ENCODE measurements at regions of chr2 and their contacts with region 1.

Region 1: GRCh38 chr2:31333527-31334183 is 80.9 kb downstream of the XDH start:
- DNase-seq: peak; percentile 70
- ATAC-seq: peak; percentile 94
- H3K4me3 Mint-ChIP-seq: no peak overlapping the region
- H3K27ac Mint-ChIP-seq: peak overlapping the region; percentile 50
- H3K4me1 Mint-ChIP-seq: peaks cover 10% of the 10 kb centered on the region
- H3K27me3 Mint-ChIP-seq: peaks cover 3% of the 10 kb centered on the region
- CTCF ChIP-seq: peak; percentile 87

Region 2: DNA sequence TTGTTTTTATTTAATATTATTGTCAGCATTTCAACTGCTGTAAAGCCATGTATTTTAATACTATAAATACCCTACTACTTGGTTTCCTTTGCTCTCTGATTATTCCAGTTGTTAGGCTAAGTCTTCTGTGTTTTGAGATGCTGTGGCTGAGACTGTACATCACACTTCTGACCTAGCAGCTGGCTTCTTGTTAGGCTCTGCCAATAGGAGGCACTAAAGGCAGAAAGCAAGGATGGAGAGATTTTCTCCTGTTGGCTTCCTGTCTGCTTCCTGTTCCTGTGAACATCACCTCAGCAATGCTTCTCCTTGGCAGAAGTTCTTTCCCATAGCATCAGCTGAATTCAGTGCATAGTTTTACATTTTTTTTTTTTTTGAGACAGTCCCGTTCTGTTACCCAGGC is 1255.1 kb before region 1 on chr2:
- CTCF ChIA-PET with region 1: no interaction called
- POLR2A ChIA-PET with region 1: no interaction called
- intact Hi-C with region 1: loop called (anchors 2 kb)
- DNase-seq: no peak
- ATAC-seq: no peak
- H3K4me3 Mint-ChIP-seq: no peak overlapping the region
- H3K27ac Mint-ChIP-seq: no peak overlapping the region
- H3K4me1 Mint-ChIP-seq: no peaks in the 10 kb centered on the region
- H3K27me3 Mint-ChIP-seq: peaks cover 20% of the 10 kb centered on the region
- CTCF ChIP-seq: no peak

Region 3: DNA sequence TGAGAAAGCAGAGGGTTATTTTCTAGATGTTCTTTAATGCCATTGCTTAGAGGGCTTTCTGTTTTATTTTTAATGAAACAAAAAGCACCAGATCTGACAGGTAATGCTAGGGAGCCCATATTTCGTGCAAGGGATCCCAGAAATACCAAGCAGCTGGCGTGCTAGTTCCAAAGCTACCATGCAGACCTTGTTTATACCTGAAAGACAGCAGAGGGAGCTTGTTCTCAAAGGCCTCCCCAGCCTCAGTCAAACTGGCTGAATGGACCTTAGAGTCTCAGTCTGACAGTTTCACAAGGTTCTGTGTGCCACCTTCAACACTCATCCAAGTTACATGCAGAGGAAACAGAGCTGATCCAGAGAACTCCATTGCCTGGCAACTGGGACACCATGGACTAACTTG is 244.0 kb before region 1 on chr2:
- CTCF ChIA-PET with region 1: interaction called, 4 read pairs
- POLR2A ChIA-PET with region 1: no interaction called
- intact Hi-C with region 1: loop called (anchors 2 kb)
- DNase-seq: no peak
- ATAC-seq: no peak
- H3K4me3 Mint-ChIP-seq: no peak overlapping the region
- H3K27ac Mint-ChIP-seq: no peak overlapping the region
- H3K4me1 Mint-ChIP-seq: no peaks in the 10 kb centered on the region
- H3K27me3 Mint-ChIP-seq: no peaks in the 10 kb centered on the region
- CTCF ChIP-seq: no peak

Region 4: DNA sequence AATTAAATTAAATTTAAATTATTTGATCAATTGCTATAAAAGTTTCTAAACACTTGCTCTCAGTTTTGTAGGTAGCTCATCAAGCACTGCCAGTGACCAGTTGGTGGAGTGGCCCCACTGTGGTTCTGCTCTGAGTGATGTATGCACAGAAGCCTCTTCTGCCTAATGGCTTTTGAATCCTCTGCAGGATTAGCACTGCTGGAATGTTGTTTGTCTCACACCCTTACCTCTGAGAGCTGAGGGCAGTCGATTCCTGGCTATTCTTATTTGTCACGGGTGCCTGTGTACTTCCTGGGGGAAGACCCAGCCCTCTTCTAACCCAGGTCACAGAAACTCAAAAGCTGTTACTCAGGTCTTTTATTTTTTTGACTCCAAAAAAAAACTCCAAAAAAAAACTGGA is 125.9 kb before region 1 on chr2:
- CTCF ChIA-PET with region 1: interaction called, 11 read pairs
- POLR2A ChIA-PET with region 1: no interaction called
- intact Hi-C with region 1: loop called (anchors 1 kb)
- DNase-seq: no peak
- ATAC-seq: peak; percentile 49
- H3K4me3 Mint-ChIP-seq: peak overlapping the region; percentile 15
- H3K27ac Mint-ChIP-seq: no peak overlapping the region
- H3K4me1 Mint-ChIP-seq: peaks cover 20% of the 10 kb centered on the region
- H3K27me3 Mint-ChIP-seq: no peaks in the 10 kb centered on the region
- CTCF ChIP-seq: no peak

Region 5: DNA sequence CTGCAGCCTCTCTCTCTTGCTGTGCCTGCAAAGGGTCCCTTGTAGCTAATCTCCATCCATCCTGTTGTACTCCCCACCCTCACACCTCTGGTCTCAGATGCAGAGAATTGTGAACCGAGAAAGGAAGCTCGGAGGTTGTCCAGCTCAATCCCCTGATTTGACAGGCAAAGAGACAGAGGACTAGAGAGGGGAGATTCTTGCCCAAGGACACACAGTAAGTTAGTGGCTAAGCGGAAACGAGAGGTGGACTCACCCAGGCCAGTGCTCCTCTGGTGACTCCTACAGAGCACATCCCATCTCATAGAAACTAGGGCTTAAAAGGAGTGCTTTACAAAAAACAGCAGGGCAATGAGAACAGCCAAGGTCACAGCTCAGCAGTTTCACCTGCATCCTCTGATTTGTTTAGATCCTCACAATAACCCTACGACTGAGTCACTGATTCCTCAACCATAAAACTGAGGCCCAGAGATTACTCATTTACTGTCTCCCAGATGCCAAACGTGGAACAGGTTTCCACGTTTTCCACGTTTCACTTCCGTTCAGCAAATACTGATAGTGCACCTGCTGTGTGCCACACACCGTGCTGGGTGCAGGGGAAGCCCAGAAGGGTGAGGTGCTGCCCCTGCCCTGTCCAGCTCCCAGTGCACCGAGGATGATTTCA is 77.6 kb before region 1 on chr2:
- CTCF ChIA-PET with region 1: interaction called, 7 read pairs
- POLR2A ChIA-PET with region 1: interaction called, 7 read pairs
- intact Hi-C with region 1: loop called (anchors 2 kb)
- DNase-seq: peak; percentile 58
- ATAC-seq: peak; percentile 70
- H3K4me3 Mint-ChIP-seq: peak overlapping the region; percentile 72
- H3K27ac Mint-ChIP-seq: peak overlapping the region; percentile 84
- H3K4me1 Mint-ChIP-seq: peaks cover 85% of the 10 kb centered on the region
- H3K27me3 Mint-ChIP-seq: no peaks in the 10 kb centered on the region
- CTCF ChIP-seq: no peak

Region 6: DNA sequence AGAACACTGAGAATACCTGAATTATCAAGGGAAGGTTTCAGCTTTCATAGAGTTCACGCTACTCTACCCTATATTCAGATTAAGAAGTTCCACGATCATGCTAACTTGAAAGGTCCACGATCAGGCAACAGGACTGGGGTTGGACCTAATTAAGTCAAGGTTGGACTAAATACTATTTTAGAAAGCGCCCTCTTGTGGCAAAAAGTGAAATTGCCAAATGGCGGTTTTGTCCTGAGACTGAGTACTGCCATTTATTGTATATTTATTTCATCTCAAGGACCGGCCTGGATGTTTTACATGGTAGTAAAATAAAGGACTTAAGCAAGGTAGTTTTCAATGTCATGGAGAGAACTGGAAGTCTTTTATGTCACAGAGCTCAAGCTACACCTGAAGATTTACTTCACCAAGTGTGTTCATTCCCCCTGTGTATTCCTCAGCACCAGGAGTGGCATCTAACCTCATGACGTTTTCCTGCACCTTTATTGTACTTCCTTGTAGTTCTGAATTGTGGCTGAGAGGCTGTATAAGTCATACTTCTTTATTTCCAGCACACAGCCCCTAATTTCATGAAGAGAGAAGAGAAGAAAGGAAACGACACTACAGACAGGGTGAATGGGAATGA is 190.3 kb after region 1 on chr2:
- CTCF ChIA-PET with region 1: no interaction called
- POLR2A ChIA-PET with region 1: no interaction called
- intact Hi-C with region 1: loop called (anchors 2 kb)
- DNase-seq: no peak
- ATAC-seq: no peak
- H3K4me3 Mint-ChIP-seq: no peak overlapping the region
- H3K27ac Mint-ChIP-seq: no peak overlapping the region
- H3K4me1 Mint-ChIP-seq: no peaks in the 10 kb centered on the region
- H3K27me3 Mint-ChIP-seq: peaks cover 30% of the 10 kb centered on the region
- CTCF ChIP-seq: peak; percentile 21

Measured in activated B cell treated with CpG ODN at 0.5 μM for 24 hours (primary cell).